Activated naive CD8-positive, alpha-beta T cell treated with anti-CD3 and anti-CD28 coated beads, Interleukin-2, amount 10 ng/mL, durations not matched to agents 7 days and 5 days (primary cell): ENCODE measurements at regions of chr11 and their contacts with region 1.

Region 1: DNA sequence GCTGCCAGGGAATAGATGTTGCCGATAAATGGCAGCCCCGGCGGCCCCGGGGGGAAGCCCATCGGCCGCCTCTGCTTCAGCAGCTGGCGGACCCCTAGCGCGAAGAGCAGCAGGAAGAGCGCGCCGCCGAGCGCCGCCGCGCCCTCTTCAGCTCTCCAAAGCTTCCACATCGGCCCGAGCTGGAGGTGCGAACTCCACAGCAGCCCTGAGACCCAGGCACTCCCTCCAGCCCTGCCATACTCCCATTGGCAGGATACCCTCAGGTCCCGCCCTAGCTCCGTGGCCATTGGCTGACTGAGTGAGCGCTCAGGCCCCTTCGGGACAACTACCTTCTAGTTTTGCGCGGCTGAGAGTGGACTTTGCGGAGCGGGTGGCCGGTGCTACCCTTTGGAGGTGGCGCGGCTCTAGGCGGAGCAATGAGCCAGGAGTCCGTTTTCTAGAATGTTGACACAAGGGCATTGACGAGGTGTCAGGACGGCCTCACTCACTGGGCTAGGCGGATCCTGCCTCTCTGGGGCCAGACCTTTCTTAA is at the start of gene CYP2R1:
- DNase-seq: peak; percentile 88
- ATAC-seq: peak; percentile 95
- H3K4me3 Mint-ChIP-seq: peak within 1 kb of the TSS; percentile 87
- H3K27ac Mint-ChIP-seq: peak within 1 kb of the TSS; percentile 93
- H3K4me1 Mint-ChIP-seq: peaks cover 50% of the 10 kb centered on the region
- H3K27me3 Mint-ChIP-seq: no peaks in the 10 kb centered on the region
- total RNA-seq, gene CYP2R1: 16.3 to 18.0 TPM

Region 2: GRCh38 chr11:14519917-14520746 is 372.0 kb before region 1 on chr11 and contains the start of gene PSMA1:
- POLR2A ChIA-PET with region 1: interaction called, 15 read pairs
- DNase-seq: peak; percentile 91
- ATAC-seq: peak; percentile 90
- H3K4me3 Mint-ChIP-seq: peak within 1 kb of the TSS; percentile 84
- H3K27ac Mint-ChIP-seq: peak within 1 kb of the TSS; percentile 90
- H3K4me1 Mint-ChIP-seq: peaks cover 16% of the 10 kb centered on the region
- H3K27me3 Mint-ChIP-seq: no peaks in the 10 kb centered on the region
- total RNA-seq, gene PSMA1: 181 to 189 TPM

Region 3: GRCh38 chr11:14537134-14537599 is 354.9 kb before region 1 on chr11:
- POLR2A ChIA-PET with region 1: no interaction called
- DNase-seq: no peak
- ATAC-seq: peak; percentile 41
- H3K4me3 Mint-ChIP-seq: peak overlapping the region; percentile 73
- H3K27ac Mint-ChIP-seq: no peak overlapping the region
- H3K4me1 Mint-ChIP-seq: peaks cover 24% of the 10 kb centered on the region
- H3K27me3 Mint-ChIP-seq: no peaks in the 10 kb centered on the region

Region 4: GRCh38 chr11:14643697-14644225 is 248.3 kb before region 1 on chr11 and contains the start of gene PDE3B:
- POLR2A ChIA-PET with region 1: interaction called, 43 read pairs
- DNase-seq: peak; percentile 84
- ATAC-seq: peak; percentile 76
- H3K4me3 Mint-ChIP-seq: peak within 1 kb of the TSS; percentile 92
- H3K27ac Mint-ChIP-seq: peak within 1 kb of the TSS; percentile 90
- H3K4me1 Mint-ChIP-seq: peaks cover 42% of the 10 kb centered on the region
- H3K27me3 Mint-ChIP-seq: no peaks in the 10 kb centered on the region
- total RNA-seq, gene PDE3B: 117 to 125 TPM

Region 5: GRCh38 chr11:14764579-14765527 is 127.2 kb before region 1 on chr11:
- POLR2A ChIA-PET with region 1: interaction called, 12 read pairs
- DNase-seq: no peak
- ATAC-seq: peak; percentile 71
- H3K4me3 Mint-ChIP-seq: no peak overlapping the region
- H3K27ac Mint-ChIP-seq: no peak overlapping the region
- H3K4me1 Mint-ChIP-seq: peaks cover 35% of the 10 kb centered on the region
- H3K27me3 Mint-ChIP-seq: no peaks in the 10 kb centered on the region

Region 6: DNA sequence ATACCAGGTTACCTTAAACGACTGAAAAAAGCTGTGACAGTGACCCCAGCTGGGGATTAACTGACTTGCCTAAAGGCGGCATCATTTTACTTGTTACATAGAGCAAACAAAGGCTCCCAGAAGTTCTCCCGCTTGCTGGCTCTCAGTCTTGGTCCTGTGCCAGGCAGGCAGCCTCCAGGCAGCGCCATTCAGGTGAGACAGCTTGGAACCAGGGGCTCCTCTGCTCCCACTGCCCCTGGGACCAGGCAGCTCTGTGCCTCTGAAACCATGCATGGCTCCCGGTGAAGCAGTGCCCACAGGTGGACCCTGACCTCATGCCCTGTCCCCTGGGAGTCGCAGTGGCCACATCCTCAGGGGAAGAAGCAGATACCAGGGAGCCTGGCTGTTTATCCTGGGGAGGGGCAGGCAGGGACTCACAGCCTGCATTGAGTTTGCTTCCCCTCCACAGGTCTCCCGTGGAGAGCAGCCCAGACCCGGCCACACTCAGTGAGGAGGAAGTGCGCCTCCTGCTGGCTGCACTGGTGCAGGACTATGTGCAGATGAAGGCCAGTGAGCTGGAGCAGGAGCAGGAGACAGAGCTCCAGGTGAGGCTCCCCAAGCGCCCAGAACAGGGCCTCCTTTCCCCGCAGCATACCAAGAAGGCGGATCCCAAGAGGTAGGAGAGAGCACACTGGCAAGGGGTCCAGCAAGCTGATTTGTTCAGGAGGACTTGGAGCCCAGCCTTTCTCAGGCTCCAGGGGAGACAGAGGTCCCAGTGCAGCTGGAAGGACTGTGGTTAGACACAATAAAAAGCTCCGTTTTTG is 15.5 kb after region 1 on chr11:
- POLR2A ChIA-PET with region 1: interaction called, 37 read pairs
- DNase-seq: peak; percentile 91
- ATAC-seq: peak; percentile 58
- H3K4me3 Mint-ChIP-seq: peak overlapping the region; percentile 2
- H3K27ac Mint-ChIP-seq: peak overlapping the region; percentile 52
- H3K4me1 Mint-ChIP-seq: peaks cover 38% of the 10 kb centered on the region
- H3K27me3 Mint-ChIP-seq: no peaks in the 10 kb centered on the region

Region 7: GRCh38 chr11:14969922-14970323 is 77.8 kb after region 1 on chr11:
- POLR2A ChIA-PET with region 1: no interaction called
- DNase-seq: peak; percentile 75
- ATAC-seq: peak; percentile 31
- H3K4me3 Mint-ChIP-seq: no peak overlapping the region
- H3K27ac Mint-ChIP-seq: no peak overlapping the region
- H3K4me1 Mint-ChIP-seq: peaks cover 21% of the 10 kb centered on the region
- H3K27me3 Mint-ChIP-seq: peaks cover 53% of the 10 kb centered on the region